SK-N-SH (cell line): ENCODE measurements at regions of chr12 and their contacts with region 1.

Region 1: DNA sequence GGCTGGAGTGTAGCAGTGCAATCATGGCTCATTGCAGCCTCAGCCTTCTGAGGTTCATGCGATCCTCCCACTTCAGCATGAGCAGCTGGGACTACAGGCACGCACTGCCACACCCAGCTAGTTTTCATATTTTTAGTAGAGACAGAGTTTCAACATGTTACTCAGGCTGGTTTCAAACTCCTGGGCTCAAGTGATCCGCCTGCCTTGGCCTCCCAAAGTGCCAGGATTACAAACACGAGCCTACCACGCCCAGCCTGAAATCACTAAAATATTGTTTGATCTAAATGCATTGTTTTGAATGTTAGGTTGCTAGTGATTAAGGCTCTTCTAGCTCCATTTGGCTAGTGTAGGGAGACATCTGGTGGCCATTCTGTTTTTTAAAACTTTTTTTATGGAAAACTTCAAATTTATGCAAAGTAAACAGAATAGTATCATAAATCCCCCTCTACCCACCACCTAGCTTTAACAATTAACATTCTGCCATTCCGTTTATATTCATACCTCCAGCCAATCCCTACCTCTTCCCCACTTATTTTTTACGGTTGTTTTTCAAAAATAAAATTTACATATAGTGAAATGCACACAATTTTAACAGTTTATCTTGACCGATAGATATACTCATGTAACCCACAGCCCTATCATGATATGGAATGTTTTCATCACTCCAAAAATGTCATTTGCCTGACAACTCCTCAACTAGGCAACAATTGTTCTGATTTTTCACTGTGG is 37.8 kb downstream of the MYO1H start:
- DNase-seq: peak; percentile 51
- H3K4me3 ChIP-seq: peak overlapping the region in 1 of 2 experiments; percentile 38; a peak in 1 of 4 replicates
- H3K27ac ChIP-seq: no peak overlapping the region
- H3K4me1 ChIP-seq: no peaks in the 10 kb centered on the region
- H3K27me3 ChIP-seq: peaks cover 6% of the 10 kb centered on the region; the same call in 1 of the 2 replicates
- CTCF ChIP-seq: peak; percentile 71
- EP300 ChIP-seq: no peak
- RAD21 ChIP-seq: peak; percentile 98

Region 2: DNA sequence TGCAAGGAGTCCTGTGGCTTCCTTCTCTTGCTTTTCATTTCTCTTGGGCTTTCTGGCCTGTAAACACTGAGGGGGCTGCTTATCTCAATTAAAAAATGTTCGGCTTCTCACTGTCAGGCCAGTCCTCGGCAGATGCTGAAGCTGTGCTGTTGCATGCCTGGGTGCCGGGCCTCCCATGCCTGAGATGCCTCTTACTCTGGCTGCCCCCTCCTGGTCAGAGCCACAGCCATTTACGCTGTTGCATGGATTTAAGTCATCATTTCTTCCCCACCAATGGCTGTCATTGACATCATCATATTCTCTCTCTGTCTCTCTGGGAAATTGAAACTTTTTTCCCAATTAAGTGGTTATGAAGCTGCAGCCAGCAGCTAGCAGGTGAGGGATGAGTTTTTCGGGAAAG is 130.1 kb before region 1 on chr12:
- CTCF ChIA-PET with region 1: interaction called, 13 read pairs
- POLR2A ChIA-PET with region 1: no interaction called
- DNase-seq: no peak
- H3K4me3 ChIP-seq: no peak overlapping the region
- H3K27ac ChIP-seq: no peak overlapping the region
- H3K4me1 ChIP-seq: no peaks in the 10 kb centered on the region
- H3K27me3 ChIP-seq: no peaks in the 10 kb centered on the region
- CTCF ChIP-seq: no peak
- EP300 ChIP-seq: no peak
- RAD21 ChIP-seq: peak; percentile 20; the same call in 1 of the 2 replicates

Region 3: DNA sequence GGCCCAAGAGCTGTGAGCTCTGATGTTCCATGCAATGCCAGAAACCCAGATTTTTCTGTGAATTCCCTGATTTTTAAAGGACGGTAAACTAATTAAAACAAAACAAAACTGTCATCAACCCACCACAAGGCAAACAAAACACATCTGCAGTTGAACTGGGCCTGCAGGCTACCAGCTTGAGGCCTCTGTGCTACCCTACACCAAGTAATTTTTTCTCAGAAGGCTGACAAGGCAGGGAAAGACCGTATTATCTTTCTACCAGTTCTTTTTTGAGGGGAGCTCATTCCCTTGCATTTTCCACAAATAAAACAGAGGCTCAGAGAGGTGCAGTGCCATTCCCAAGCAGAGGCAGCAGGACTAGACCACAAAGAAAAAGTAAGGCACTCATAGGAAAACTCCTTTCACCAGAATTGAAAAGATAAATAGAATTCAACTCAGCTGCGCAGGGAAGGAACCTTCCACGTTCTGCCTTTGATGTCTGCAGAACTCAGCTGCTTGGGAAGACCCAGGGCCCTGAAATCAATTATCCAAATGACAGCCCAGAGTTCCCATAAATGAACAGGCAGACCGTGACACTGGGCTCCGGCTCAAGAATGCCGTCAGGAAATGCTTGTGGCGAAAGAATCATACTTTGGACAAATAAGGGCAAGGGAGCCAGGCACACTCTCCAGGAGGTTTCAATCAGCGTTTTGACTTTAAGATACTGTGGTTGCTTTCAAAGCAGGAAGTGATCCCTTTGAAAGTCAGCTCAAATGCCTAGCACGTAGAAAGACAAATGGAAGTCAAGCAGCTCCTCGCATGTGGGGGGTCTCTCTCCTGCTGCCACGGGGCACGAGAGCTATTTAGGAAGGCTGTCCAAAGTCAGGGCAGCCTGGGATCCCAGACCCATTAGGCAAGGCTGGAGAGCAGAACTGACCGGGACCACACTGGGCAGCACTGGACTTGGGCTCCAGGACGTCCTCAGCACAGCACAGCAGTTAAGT is 77.5 kb after region 1 on chr12:
- CTCF ChIA-PET with region 1: no interaction called
- POLR2A ChIA-PET with region 1: no interaction called
- DNase-seq: peak; percentile 51
- H3K4me3 ChIP-seq: peak overlapping the region; percentile 23 to 40; a peak in 3 of 4 replicates
- H3K27ac ChIP-seq: peak overlapping the region; percentile 97 to 99
- H3K4me1 ChIP-seq: peaks cover 56 to 63% of the 10 kb centered on the region in 2 experiments
- H3K27me3 ChIP-seq: no peaks in the 10 kb centered on the region
- CTCF ChIP-seq: no peak
- EP300 ChIP-seq: peak; percentile 66 to 93
- RAD21 ChIP-seq: no peak